ENCODE measurements at regions of chr16 and their contacts with region 1.

Region 1: DNA sequence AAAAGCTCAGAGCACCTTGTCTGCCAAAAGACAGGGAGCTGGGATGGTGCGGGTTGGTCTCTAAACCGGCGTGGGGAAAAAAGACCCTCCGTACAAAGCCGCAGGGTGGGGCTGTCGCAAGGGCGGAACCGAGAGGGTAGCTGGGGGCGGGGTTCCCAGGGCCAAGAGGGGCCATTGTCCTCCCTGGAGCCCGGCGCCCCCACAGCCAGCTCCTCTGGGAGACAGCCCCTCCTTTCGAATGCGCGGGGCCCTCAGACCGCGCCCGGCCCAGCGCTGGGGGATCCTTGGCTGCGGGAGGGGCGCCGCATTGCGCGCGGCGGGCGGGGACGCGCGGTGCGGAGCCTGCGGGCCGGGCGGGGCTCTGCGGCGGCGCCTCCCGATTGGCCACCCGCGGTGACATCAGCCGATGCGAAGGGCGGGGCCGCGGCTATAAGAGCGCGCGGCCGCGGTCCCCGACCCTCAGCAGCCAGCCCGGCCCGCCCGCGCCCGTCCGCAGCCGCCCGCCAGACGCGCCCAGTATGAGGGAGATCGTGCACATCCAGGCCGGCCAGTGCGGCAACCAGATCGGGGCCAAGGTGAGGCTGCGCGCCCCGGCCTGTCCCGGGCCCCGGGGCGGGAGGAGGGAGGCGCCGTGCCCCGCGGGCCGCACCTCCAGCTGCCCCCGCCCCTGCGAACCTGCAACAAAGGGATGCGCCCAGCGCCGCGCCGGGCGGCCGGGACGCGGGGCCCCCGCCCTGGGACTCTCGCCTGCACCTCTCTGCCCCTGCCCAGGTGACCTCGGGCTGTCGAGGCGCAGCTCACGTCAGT is at the start of gene TUBB3:
- DNase-seq: peak in 1 of 2 experiments; percentile 93
- H3K4me3 ChIP-seq: peak within 1 kb of the TSS; percentile 65 to 95 (median 72)
- H3K27ac ChIP-seq: peak within 1 kb of the TSS; percentile 39; the same call in 1 of the 2 replicates
- H3K4me1 ChIP-seq: peaks cover 0 to 32% (median 22%) of the 10 kb centered on the region in 4 experiments; a peak in 6 of 7 replicates
- H3K27me3 ChIP-seq: peaks cover 0 to 19% (median 16%) of the 10 kb centered on the region in 4 experiments; a peak in 6 of 7 replicates
- CTCF ChIP-seq: no peak
- EP300 ChIP-seq: no peak
- POLR2A ChIP-seq: peak in 1 of 2 experiments; percentile 97; a peak in 2 of 3 replicates
- RAD21 ChIP-seq: 0 out of 4 replicates have a peak, but pooled peaks of 1 of the 2 experiments have one; percentile 8
- total RNA-seq, gene TUBB3: 275 and 292 TPM in 2 replicates

Region 2: GRCh38 chr16:89749647-89750046 is 173.4 kb before region 1 on chr16:
- CTCF ChIA-PET with region 1: no interaction called
- POLR2A ChIA-PET with region 1: no interaction called
- DNase-seq: no peak
- H3K4me3 ChIP-seq: no peak overlapping the region
- H3K27ac ChIP-seq: no peak overlapping the region
- H3K4me1 ChIP-seq: no peaks in the 10 kb centered on the region
- H3K27me3 ChIP-seq: no peaks in the 10 kb centered on the region
- CTCF ChIP-seq: no peak
- EP300 ChIP-seq: no peak
- POLR2A ChIP-seq: no peak
- RAD21 ChIP-seq: no peak

Region 3: DNA sequence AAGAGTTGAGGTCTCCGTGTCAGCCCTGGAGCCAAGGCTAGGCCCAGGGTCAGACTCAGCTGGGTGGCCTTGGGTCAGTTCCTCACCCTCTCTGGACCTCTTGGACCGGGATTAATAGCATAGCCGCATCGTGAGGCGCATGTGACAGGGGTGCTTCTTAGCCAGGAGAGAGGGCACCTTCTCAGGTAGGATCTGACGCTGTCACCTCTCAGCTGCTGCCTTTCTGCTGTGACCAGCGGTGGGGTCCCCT is 85.9 kb before region 1 on chr16:
- CTCF ChIA-PET with region 1: no interaction called
- POLR2A ChIA-PET with region 1: no interaction called
- DNase-seq: no peak
- H3K4me3 ChIP-seq: no peak overlapping the region
- H3K27ac ChIP-seq: no peak overlapping the region
- H3K4me1 ChIP-seq: peaks cover 0 to 5% (median 1%) of the 10 kb centered on the region in 4 experiments; a peak in 2 of 7 replicates
- H3K27me3 ChIP-seq: no peaks in the 10 kb centered on the region
- CTCF ChIP-seq: no peak
- EP300 ChIP-seq: no peak
- POLR2A ChIP-seq: no peak
- RAD21 ChIP-seq: no peak

Region 4: DNA sequence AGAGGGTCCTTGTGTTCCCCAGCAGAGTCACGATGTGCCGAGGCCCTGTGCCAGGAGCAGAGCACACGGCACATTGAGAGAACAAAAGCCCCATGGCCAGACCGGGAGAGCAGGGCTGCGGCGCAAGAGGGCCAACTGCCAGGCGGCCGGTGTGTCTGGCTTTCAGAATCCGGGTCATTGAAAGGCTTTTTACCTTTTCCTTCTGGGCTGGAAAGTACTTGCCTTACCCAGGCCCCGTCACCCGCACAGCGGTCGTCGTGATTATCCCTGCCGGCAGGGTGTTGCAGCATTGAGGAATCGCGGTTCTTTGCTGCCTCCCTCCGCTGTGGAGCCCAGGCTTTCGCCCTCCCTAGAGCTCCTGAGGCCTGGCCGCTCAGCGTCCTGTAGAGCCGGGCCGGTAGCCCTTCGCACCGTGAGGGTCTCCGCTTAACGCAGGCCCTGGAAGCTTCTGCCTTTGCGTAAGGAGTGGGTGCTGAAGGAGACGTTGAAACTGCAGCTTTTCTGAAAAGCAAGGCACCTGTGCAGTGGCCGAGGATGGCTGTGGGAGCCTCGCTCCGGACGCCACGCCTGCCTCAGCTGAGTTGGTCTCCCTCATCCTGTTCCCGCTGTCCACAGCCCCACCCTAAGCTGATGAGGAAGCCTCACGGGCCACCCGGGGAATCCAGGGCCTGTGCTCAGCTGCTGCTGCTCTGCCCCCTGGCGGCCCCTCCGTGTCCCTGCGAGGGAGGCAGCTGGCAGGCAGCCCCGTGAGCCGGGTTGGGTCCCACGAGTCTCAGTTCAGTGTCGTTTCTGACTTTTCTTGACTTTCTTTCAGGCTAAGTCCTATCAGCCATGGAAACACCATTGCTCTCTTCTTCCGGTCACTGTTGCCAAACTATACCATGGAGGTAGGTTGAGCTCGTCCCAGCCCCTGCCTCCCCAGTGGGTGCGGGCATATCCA is 13.0 kb before region 1 on chr16:
- CTCF ChIA-PET with region 1: interaction called, 70 read pairs
- POLR2A ChIA-PET with region 1: interaction called, 71 read pairs
- DNase-seq: peak in 1 of 2 experiments; percentile 93
- H3K4me3 ChIP-seq: no peak overlapping the region
- H3K27ac ChIP-seq: peak overlapping the region; percentile 42; the same call in 1 of the 2 replicates
- H3K4me1 ChIP-seq: peaks cover 0 to 2% (median 0%) of the 10 kb centered on the region in 4 experiments; a peak in 4 of 7 replicates
- H3K27me3 ChIP-seq: no peaks in the 10 kb centered on the region
- CTCF ChIP-seq: peak; percentile 91 to 98 (median 97)
- EP300 ChIP-seq: no peak
- POLR2A ChIP-seq: no peak
- RAD21 ChIP-seq: peak; percentile 56 to 76

Region 5: GRCh38 chr16:89958068-89958467 is 35.0 kb after region 1 on chr16:
- CTCF ChIA-PET with region 1: interaction called, 3 read pairs
- POLR2A ChIA-PET with region 1: interaction called, 42 read pairs
- DNase-seq: peak in 1 of 2 experiments; percentile 77
- H3K4me3 ChIP-seq: no peak overlapping the region
- H3K27ac ChIP-seq: no peak overlapping the region
- H3K4me1 ChIP-seq: peaks cover 0 to 3% (median 0%) of the 10 kb centered on the region in 4 experiments; a peak in 4 of 7 replicates
- H3K27me3 ChIP-seq: no peaks in the 10 kb centered on the region
- CTCF ChIP-seq: no peak
- EP300 ChIP-seq: no peak
- POLR2A ChIP-seq: no peak
- RAD21 ChIP-seq: no peak

Region 6: DNA sequence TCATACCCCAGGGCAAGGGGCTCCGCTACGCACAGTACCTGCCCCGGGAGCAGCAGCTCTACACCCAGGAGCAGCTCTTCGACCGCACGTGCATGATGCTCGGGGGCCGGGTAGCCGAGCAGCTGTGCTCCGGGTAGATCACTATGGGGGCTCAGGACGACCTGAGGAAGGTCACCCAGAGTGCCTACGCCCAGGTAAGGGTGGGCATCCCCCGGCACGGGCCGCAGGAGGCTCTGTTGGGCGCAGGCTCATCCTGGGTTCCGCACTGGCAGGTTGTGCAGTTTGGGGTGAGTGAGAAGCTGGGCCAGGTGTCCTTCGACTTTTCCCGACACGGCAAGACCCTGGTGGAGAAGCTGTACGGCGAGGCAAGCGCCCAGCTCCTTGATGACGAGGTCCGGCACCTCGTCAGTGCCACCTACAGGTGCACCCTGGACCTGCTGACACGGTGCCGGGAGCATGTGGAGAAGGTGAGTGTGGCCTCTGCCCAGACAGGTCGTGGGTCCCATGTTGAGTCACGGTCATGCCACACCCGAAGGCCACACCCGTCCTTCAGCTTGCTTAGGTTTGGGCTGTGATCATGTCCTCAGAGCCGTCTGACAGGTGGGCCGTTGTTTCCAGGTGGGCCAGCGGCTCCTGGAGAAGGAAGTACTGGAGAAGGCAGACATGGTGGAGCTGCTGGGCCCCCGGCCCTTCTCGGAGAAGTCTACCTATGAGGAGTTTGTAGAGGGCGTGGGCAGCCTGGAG is 76.9 kb after region 1 on chr16:
- CTCF ChIA-PET with region 1: no interaction called
- POLR2A ChIA-PET with region 1: interaction called, 24 read pairs
- DNase-seq: no peak
- H3K4me3 ChIP-seq: no peak overlapping the region
- H3K27ac ChIP-seq: no peak overlapping the region
- H3K4me1 ChIP-seq: no peaks in the 10 kb centered on the region
- H3K27me3 ChIP-seq: no peaks in the 10 kb centered on the region
- CTCF ChIP-seq: peak; percentile 19 to 62 (median 49); a peak in 3 of 4 replicates
- EP300 ChIP-seq: no peak
- POLR2A ChIP-seq: no peak
- RAD21 ChIP-seq: no peak; a peak in 1 of 4 replicates

Measured in H1 (cell line).